Endothelial cell of umbilical vein (primary cell): ENCODE measurements at regions of chr6 and their contacts with region 1.

Region 1: GRCh38 chr6:136031982-136032381 is 180.5 kb downstream of the PDE7B start:
- DNase-seq: peak; percentile 66
- H3K4me3 ChIP-seq: no peak overlapping the region
- H3K27ac ChIP-seq: no peak overlapping the region
- H3K4me1 ChIP-seq: peaks cover 36% of the 10 kb centered on the region
- H3K27me3 ChIP-seq: no peaks in the 10 kb centered on the region
- CTCF ChIP-seq: peak; percentile 55 to 61
- POLR2A ChIP-seq: no peak

Region 2: GRCh38 chr6:136077834-136078576 is 46.0 kb after region 1 on chr6:
- CTCF ChIA-PET with region 1: interaction called, 15 read pairs
- POLR2A ChIA-PET with region 1: interaction called, 4 read pairs
- dilution Hi-C with region 1: no loop called
- intact Hi-C with region 1: no loop called
- DNase-seq: peak; percentile 97
- H3K4me3 ChIP-seq: no peak overlapping the region
- H3K27ac ChIP-seq: peak overlapping the region; percentile 69
- H3K4me1 ChIP-seq: peaks cover 23% of the 10 kb centered on the region
- H3K27me3 ChIP-seq: no peaks in the 10 kb centered on the region
- CTCF ChIP-seq: no peak
- POLR2A ChIP-seq: no peak

Region 3: GRCh38 chr6:136103763-136104311 is 71.9 kb after region 1 on chr6:
- CTCF ChIA-PET with region 1: interaction called, 17 read pairs
- POLR2A ChIA-PET with region 1: no interaction called
- dilution Hi-C with region 1: no loop called
- intact Hi-C with region 1: loop called (anchors 1 kb)
- DNase-seq: peak; percentile 62
- H3K4me3 ChIP-seq: no peak overlapping the region
- H3K27ac ChIP-seq: no peak overlapping the region
- H3K4me1 ChIP-seq: peaks cover 26% of the 10 kb centered on the region
- H3K27me3 ChIP-seq: no peaks in the 10 kb centered on the region
- CTCF ChIP-seq: no peak
- POLR2A ChIP-seq: no peak